ENCODE measurements at regions of chrX and their contacts with region 1.

Region 1: DNA sequence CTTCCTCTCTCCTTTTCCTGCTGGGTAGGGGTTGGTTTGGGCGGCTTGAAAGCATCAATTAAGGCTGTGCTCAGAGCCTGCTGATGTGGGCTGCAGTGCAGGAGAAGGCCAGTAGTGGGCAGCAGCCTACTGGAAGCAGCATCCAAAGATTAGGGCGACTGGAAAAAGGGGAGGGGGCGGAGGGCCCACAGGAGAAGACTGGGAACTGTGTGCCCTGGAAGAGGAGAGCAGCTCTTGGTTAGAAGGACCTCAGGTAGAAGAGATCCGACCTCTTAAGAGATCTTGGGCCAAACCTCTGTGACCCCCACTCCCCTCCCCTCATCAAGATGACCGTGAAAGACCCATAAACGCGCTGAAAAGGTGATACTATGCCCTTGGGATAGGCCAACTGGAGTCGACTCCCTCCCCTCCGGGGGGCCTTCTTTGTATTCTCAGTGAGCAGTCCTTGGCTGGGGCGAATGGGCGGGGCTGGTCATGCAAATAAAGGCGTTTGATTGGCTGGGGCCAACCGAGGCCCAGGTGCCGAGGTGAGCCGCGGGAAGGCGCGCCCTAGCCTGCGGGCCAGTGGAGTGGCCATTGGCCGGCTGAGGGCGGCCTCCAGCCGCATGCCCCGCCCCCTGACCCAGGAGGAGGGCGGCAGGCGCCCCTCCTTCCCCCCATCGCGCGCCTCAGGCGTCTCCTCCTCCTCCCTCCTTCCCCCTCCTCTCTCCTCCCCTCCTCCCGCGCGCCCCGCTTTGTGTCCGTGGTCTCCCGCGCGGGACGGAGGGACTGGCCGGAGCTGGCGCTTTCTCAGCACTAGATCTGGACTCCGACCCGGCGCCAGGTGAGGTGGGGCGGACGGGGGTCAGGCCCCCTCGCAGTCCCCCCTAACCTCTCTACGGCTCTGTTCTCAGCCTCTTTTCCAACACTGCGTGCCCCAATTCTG is 10.1 kb downstream of the DLG3 start:
- DNase-seq: peak; percentile 76
- ATAC-seq: peak; percentile 89 to 96

Region 2: GRCh38 chrX:70336767-70337166 is 117.9 kb before region 1 on chrX:
- intact Hi-C with region 1: no loop called
- DNase-seq: no peak
- ATAC-seq: no peak

Region 3: GRCh38 chrX:70554081-70554480 is 99.4 kb after region 1 on chrX:
- intact Hi-C with region 1: loop called (anchors 5 to 10 kb)
- DNase-seq: no peak
- ATAC-seq: no peak

Region 4: GRCh38 chrX:70720721-70721120 is 266.0 kb after region 1 on chrX:
- intact Hi-C with region 1: no loop called
- DNase-seq: no peak
- ATAC-seq: no peak